KBM-7 (cell line): ENCODE measurements at regions of chr12 and their contacts with region 1.

Region 1: DNA sequence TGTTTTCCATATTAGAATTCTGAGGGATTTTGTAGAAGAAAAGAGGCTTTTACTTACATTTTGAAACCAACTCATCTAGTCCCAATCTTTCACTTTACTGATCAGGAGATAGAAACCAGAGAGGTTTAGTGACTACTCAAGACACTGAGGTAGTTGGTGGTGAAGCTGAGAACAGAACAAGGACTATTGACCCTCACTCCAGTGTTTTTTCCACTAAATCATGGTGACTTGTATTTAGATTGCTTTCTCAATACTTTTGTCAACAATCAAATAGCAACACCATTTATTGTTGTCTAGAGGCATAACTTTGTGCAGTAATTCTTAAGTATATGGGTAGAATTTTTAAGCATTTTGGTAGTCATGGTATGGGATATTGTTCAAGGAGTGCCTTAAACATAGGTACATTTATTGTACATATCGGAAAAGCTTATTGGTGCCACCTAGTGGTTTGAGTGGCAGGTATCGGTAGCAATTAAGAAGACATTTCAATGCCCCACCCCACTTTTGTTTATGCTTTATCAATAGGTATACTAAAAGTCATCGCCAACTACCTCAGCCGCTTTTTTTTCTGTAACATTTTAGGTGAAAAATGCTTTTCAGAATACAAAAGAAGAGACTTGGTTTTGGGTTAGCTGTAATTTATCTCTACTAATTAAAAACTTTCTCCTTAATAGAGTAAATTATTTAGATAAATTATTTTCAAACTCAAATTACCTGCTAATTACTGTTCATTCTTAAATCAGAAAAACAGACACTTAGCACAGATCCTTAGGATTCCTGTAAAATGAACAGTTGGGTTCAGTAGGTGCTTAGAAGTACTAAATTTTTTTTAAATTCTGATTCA is 47.3 kb upstream of the PAWR start:
- DNase-seq: peak; percentile 53

Region 2: DNA sequence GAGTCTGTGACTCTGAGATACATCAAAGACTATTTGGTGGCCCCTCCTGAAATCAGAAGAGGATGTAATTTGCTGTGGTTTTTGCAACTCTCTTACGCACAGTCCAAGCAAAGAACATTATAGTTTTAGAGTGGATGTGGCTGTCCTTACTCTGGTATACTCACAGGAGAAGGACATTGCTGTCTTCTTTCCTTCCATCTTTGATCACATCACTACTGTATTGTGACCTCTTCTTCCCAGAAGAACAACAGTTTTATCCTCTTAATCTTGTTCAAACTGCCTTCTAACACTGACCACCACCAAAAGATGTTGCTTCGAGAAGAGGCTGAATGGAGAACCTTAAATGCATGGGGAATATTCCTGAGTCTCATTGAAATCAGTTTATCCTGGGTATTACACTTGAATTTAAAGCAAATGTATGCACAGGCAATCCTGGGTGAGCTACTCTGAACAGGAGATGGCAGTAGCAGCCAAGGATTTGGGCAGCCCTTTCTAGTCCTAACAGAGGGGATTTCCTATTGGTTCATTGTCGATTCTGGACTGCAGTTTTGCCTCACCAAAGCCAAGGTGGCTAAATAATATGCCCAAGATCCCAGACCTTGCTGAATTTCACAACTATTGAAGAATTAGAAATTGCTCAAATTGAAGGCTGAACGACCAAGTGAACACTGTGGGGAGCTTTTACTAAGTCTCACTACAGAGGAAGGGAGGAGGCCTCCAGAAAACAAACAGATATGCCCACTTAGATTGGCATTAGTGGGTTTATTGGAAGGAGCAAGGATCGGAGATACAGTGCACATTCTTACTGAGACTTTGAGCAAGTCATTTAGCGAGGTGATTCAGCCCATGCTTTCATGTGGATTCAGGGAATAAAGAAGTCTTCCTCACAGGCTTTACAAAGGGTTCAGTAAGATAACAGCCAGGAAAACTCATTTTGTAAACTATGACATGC is 330.1 kb before region 1 on chr12:
- in situ Hi-C with region 1: loop called (anchors 25 kb)
- DNase-seq: peak; percentile 43

Region 3: DNA sequence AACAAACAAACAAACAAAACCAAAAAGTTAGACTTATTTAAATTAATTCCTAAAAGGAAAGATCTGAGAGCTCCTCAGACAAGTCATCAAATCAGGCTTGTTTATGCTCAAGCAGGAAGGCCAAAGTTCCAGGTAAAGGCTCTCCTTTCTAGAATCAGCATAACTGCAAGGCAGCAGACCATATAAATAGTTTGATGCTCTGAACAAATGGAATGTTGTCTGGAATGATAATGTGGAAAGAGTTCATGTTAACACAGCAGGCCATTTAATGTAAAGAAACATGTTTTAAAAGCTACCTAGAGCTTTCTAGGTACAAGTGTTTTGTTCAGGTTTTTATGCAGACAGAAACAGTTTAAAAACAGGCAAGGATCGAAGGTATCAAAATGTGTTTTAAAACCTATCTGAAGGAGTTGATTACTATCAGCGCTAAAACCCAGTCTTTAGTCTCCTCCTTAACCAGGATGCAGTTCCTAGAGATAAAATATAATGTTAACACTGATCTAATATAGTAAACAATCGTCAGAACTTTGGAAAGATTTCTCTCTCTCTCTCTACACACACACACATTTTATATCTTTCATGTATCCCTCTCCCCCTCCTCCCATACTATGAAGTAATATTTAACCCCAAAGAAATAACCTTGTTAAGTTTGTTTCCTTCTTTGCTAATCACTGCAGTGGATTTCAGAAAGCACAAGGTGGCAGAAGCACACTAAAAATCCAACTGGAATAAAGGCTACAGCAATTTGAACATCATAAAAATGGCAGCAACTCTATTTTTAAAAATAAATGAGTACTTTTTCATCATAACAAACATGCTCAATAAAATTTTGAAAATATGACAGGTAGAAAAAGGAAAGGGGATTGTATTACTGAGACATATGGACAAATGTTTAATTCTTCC is 182.8 kb before region 1 on chr12:
- in situ Hi-C with region 1: loop called (anchors 25 kb)
- DNase-seq: peak; percentile 35

Region 4: GRCh38 chr12:80498059-80498728 is 760.1 kb after region 1 on chr12:
- in situ Hi-C with region 1: no loop called
- DNase-seq: no peak